ENCODE measurements at regions of chr3 and their contacts with region 1.

Region 1: DNA sequence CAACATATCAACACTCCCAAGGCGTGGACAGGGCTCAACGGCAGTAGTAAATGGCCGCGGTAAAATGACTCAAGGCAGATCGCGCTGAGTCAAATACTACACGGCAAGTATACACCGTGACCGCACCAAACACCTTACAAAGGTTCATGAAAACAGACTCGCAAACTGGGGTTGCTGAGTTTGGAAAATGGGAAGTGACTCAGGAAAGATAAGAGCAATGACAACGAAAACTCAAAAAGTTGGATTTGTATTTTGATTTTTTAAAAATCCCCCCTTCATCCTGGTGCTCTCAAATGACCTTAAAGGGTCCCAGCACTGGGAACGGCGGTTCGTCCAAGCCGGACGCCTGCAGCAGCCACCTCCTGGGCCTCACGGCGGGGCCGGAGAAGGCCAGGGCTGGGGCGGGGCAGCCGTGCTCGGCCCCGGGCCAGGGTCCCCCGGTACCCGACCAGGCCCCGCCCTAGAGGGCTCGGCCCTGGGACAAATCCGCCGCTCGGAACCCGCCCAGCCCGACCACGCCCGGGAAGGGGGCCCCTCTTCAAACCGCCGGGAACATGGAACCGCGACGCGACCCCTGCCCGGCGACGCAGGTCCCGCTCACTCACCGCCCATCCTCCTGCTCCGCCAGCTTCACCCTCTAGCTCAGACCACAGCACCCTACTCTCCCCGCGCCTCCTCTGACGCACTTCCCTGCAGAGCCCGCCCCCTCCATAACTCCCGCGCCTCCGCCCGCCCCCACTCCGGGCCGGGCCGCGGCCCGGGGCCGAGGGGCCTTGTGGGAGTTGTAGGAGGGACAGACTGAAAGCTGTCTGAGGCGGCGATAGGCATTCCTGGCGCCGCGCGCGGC is at the start of gene CLDND1:
- DNase-seq: peak; percentile 86 to 96 (median 93)
- ATAC-seq: peak; percentile 96 to 97
- H3K4me3 Mint-ChIP-seq: peak within 1 kb of the TSS; percentile 83 to 98 (median 95)
- H3K27ac Mint-ChIP-seq: peak within 1 kb of the TSS; percentile 76 to 99 (median 96)
- H3K4me1 Mint-ChIP-seq: peaks cover 24 to 54% (median 47%) of the 10 kb centered on the region in 4 donors
- H3K27me3 Mint-ChIP-seq: no peaks in the 10 kb centered on the region
- polyA plus RNA-seq, gene CLDND1: 41.9 to 78.4 (median 49.1) TPM

Region 2: DNA sequence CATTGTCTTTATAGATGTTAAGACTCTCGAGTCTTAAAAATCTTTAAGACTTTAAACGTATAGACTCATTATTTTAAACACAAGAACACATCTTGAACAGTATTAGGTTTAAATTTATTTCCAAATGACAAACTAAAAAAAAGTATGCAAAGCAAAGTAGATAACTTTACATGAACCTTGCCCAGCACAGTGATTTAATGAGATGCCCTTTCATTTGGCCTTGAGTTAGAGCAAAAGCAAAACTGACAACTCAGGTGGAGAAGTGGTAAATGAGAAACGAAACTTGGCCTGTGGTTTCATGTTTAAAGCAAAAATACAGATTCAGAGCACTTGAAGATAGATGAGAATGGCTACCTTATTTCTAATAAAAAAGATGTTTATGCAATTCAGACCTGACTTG is 17.9 kb after region 1 on chr3:
- POLR2A ChIA-PET with region 1: no interaction called
- DNase-seq: no peak
- ATAC-seq: no peak
- H3K4me3 Mint-ChIP-seq: no peak overlapping the region
- H3K27ac Mint-ChIP-seq: peak overlapping the region in 1 of 10 donors; percentile 30
- H3K4me1 Mint-ChIP-seq: peaks cover 0 to 15% (median 0%) of the 10 kb centered on the region in 4 donors
- H3K27me3 Mint-ChIP-seq: no peaks in the 10 kb centered on the region

Region 3: GRCh38 chr3:98563661-98564281 is 41.3 kb after region 1 on chr3:
- POLR2A ChIA-PET with region 1: interaction called, 56 read pairs
- DNase-seq: peak in 5 of 10 donors; percentile 6 to 61 (median 38)
- ATAC-seq: peak; percentile 31 to 72
- H3K4me3 Mint-ChIP-seq: peak overlapping the region; percentile 33 to 78 (median 58)
- H3K27ac Mint-ChIP-seq: peak overlapping the region; percentile 82 to 98 (median 94)
- H3K4me1 Mint-ChIP-seq: peaks cover 12 to 66% (median 57%) of the 10 kb centered on the region in 4 donors
- H3K27me3 Mint-ChIP-seq: no peaks in the 10 kb centered on the region

Region 4: GRCh38 chr3:98593046-98593936 is 70.8 kb after region 1 on chr3 and contains the start of gene CPOX:
- POLR2A ChIA-PET with region 1: interaction called, 17 read pairs
- DNase-seq: peak; percentile 66 to 86 (median 72)
- ATAC-seq: peak; percentile 94 to 97
- H3K4me3 Mint-ChIP-seq: peak within 1 kb of the TSS; percentile 92 to 99 (median 96)
- H3K27ac Mint-ChIP-seq: peak within 1 kb of the TSS; percentile 74 to 99 (median 93)
- H3K4me1 Mint-ChIP-seq: peaks cover 14 to 45% (median 39%) of the 10 kb centered on the region in 4 donors
- H3K27me3 Mint-ChIP-seq: peaks cover 0 to 5% (median 0%) of the 10 kb centered on the region in 5 donors
- polyA plus RNA-seq, gene CPOX: 2.4 to 3.4 (median 2.6) TPM

Region 5: DNA sequence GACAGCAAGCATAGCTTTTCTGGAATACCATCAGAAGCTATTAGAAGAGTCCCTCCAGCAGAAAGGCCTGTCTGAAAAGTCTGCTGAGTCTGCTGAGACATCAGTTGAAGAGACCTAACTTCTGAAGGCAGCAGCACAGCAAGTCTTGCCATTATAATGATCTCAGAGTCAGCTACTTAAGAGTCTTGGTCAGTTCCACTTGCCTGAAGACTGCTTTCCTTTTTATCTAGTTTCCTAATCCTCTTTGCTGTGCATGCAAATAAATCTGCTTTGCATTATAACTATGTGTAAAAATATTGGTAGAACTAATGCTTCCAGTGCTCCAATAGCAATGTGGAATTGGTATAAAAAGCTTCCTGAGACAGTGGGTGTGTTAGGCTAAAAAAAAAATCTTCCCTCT is 105.8 kb after region 1 on chr3:
- POLR2A ChIA-PET with region 1: no interaction called
- DNase-seq: no peak
- ATAC-seq: no peak
- H3K4me3 Mint-ChIP-seq: no peak overlapping the region
- H3K27ac Mint-ChIP-seq: no peak overlapping the region
- H3K4me1 Mint-ChIP-seq: no peaks in the 10 kb centered on the region
- H3K27me3 Mint-ChIP-seq: peaks cover 0 to 5% (median 0%) of the 10 kb centered on the region in 5 donors

Measured in naive thymus-derived CD8-positive, alpha-beta T cell (primary cell).